A673 (cell line): ENCODE measurements at regions of chr5 and their contacts with region 1.

Region 1: DNA sequence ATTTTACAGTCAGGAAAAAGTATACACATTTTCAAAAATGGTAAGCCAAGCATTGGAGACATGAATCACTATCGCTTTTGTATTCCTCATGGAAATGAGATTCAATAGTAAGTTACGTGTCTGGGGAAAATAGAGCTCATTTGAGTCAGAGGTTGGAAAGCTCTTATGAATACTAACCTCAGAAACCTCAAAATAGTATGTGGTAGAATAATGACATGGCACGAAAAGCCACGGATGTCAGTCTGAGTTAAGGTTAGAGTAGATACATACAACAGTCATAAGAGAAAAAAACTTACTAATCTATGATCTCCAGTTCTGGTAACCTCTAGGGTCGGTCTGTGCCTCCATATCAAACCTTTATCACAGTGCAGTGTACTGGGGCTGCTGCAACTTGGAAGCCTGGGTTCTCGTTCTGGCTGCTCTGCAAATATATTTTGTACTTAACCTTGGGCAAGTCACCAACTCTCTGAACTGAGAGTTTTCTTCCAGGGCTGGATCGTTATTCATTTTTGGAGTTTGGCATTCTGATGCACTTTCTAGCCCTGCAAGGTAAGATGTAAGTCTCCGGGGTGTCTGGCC is 31.8 kb downstream of the MAP1B start:
- DNase-seq: no peak
- H3K4me3 ChIP-seq: no peak overlapping the region
- H3K27ac ChIP-seq: no peak overlapping the region
- H3K4me1 ChIP-seq: peaks cover 52% of the 10 kb centered on the region
- H3K27me3 ChIP-seq: no peaks in the 10 kb centered on the region
- CTCF ChIP-seq: no peak

Region 2: GRCh38 chr5:71887680-71888079 is 251.4 kb before region 1 on chr5:
- CTCF ChIA-PET with region 1: no interaction called
- POLR2A ChIA-PET with region 1: no interaction called
- intact Hi-C with region 1: no loop called
- DNase-seq: peak; percentile 74
- H3K4me3 ChIP-seq: no peak overlapping the region
- H3K27ac ChIP-seq: no peak overlapping the region
- H3K4me1 ChIP-seq: no peaks in the 10 kb centered on the region
- H3K27me3 ChIP-seq: peaks cover 5% of the 10 kb centered on the region
- CTCF ChIP-seq: no peak

Region 3: GRCh38 chr5:72307968-72308852 is 169.2 kb after region 1 on chr5:
- CTCF ChIA-PET with region 1: no interaction called
- POLR2A ChIA-PET with region 1: no interaction called
- intact Hi-C with region 1: loop called (anchors 5 kb)
- DNase-seq: peak; percentile 99
- H3K4me3 ChIP-seq: peak overlapping the region; percentile 80
- H3K27ac ChIP-seq: peak overlapping the region; percentile 98
- H3K4me1 ChIP-seq: peaks cover 33% of the 10 kb centered on the region
- H3K27me3 ChIP-seq: no peaks in the 10 kb centered on the region
- CTCF ChIP-seq: peak; percentile 92

Region 4: GRCh38 chr5:72788866-72789505 is 650.0 kb after region 1 on chr5:
- CTCF ChIA-PET with region 1: no interaction called
- POLR2A ChIA-PET with region 1: no interaction called
- intact Hi-C with region 1: no loop called
- DNase-seq: no peak
- H3K4me3 ChIP-seq: no peak overlapping the region
- H3K27ac ChIP-seq: no peak overlapping the region
- H3K4me1 ChIP-seq: no peaks in the 10 kb centered on the region
- H3K27me3 ChIP-seq: peaks cover 5% of the 10 kb centered on the region
- CTCF ChIP-seq: no peak